Heart left ventricle (tissue), 16 donors: ENCODE measurements at regions of chr3 and their contacts with region 1.

Region 1: GRCh38 chr3:123258811-123259420 is 57.2 kb downstream of the SEC22A start:
- DNase-seq: no peak
- ATAC-seq: peak in 3 of 4 donors; percentile 22 to 58 (median 56)
- H3K4me3 ChIP-seq: no peak overlapping the region
- H3K27ac ChIP-seq: no peak overlapping the region
- H3K4me1 ChIP-seq: peaks cover 0 to 12% (median 0%) of the 10 kb centered on the region in 12 donors
- H3K27me3 ChIP-seq: no peaks in the 10 kb centered on the region
- CTCF ChIP-seq: peak; percentile 33 to 73 (median 57)
- POLR2A ChIP-seq: no peak

Region 2: GRCh38 chr3:122858373-122858772 is 400.5 kb before region 1 on chr3:
- intact Hi-C with region 1: loop called in 2 of 10 experiments (anchors 10 kb)
- DNase-seq: no peak
- ATAC-seq: no peak
- H3K4me3 ChIP-seq: no peak overlapping the region
- H3K27ac ChIP-seq: no peak overlapping the region
- H3K4me1 ChIP-seq: no peaks in the 10 kb centered on the region
- H3K27me3 ChIP-seq: no peaks in the 10 kb centered on the region
- CTCF ChIP-seq: peak in 11 of 12 donors; percentile 18 to 60 (median 40)
- POLR2A ChIP-seq: no peak

Region 3: GRCh38 chr3:123319760-123320159 is 60.8 kb after region 1 on chr3:
- intact Hi-C with region 1: no loop called
- DNase-seq: peak in 1 of 5 donors; percentile 57
- ATAC-seq: peak in 3 of 4 donors; percentile 18 to 27 (median 22)
- H3K4me3 ChIP-seq: no peak overlapping the region
- H3K27ac ChIP-seq: peak overlapping the region in 7 of 12 donors; percentile 18 to 73 (median 46)
- H3K4me1 ChIP-seq: peaks cover 0 to 45% (median 6%) of the 10 kb centered on the region in 12 donors
- H3K27me3 ChIP-seq: no peaks in the 10 kb centered on the region
- CTCF ChIP-seq: no peak
- POLR2A ChIP-seq: no peak